Dendritic cell treated with granulocyte-macrophage colony-stimulating factor and Interleukin-4, amounts not matched to agents 40 ng/mL and 50 ng/mL, for 4 days (primary cell): ENCODE measurements at regions of chr1 and their contacts with region 1.

Region 1: DNA sequence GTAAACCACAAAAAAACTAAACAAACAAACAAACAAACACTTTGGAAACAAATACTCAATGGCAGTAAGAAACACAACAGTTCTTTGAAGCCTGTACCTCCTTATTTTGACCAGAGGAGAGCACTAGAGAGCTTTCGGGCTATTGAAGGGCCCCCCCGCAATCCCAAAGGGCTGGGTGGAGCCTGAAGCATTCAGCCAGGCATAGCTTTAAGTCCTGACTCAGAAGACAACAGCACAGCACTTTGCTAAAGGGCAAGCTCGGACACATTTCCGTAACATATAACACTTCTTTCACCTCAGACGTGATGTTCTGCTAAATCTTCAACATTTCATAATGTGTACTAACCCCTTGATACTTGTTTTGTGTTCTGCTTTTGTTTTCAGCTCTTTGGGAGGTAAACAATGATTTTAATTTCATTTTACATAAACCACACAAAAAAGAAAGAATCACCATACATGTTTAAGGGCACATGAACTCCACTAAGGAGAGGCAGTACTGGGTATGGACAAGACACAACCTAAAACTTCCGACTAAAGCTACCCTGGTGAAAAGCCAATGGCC is 9.7 kb upstream of the SHCBP1L start:
- H3K4me3 Mint-ChIP-seq: peak overlapping the region; percentile 26
- H3K27ac Mint-ChIP-seq: peak overlapping the region; percentile 34
- H3K4me1 Mint-ChIP-seq: peaks cover 6% of the 10 kb centered on the region
- H3K27me3 Mint-ChIP-seq: peaks cover 7% of the 10 kb centered on the region

Region 2: GRCh38 chr1:183233113-183233512 is 270.5 kb after region 1 on chr1:
- intact Hi-C with region 1: loop called (anchors 2 kb)
- H3K4me3 Mint-ChIP-seq: no peak overlapping the region
- H3K27ac Mint-ChIP-seq: no peak overlapping the region
- H3K4me1 Mint-ChIP-seq: no peaks in the 10 kb centered on the region
- H3K27me3 Mint-ChIP-seq: peaks cover 2% of the 10 kb centered on the region

Region 3: GRCh38 chr1:183543619-183544204 is 581.1 kb after region 1 on chr1:
- intact Hi-C with region 1: loop called (anchors 10 kb)
- H3K4me3 Mint-ChIP-seq: no peak overlapping the region
- H3K27ac Mint-ChIP-seq: peak overlapping the region; percentile 25
- H3K4me1 Mint-ChIP-seq: peaks cover 26% of the 10 kb centered on the region
- H3K27me3 Mint-ChIP-seq: no peaks in the 10 kb centered on the region

Region 4: DNA sequence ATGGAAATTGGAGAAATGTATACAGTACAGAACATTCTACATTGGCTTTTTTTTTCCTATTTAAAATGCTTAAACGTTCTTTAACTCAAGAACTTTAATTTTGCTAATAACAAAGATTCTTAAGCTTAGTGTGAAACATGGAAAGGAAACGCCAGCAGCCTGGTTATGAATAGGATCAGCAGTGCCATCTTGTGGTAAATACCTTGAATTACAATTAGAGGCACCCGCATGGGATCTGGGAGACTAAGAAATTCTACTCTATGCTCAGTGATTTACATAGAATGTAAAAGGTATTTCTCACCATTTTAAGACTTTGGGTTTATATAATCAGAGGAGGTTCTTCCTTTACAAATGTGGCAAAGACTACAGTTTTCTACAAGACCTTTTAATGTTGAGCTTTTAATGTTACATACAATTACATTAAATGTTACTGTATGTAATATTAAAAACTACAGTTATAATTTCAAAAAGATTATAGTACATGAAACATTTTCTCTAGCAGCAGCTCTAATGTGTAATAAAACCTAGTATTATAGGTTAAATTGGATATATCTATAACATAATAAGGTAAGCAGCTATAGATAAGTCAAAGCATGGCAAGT is 722.6 kb after region 1 on chr1:
- intact Hi-C with region 1: loop called (anchors 10 kb)
- H3K4me3 Mint-ChIP-seq: no peak overlapping the region
- H3K27ac Mint-ChIP-seq: no peak overlapping the region
- H3K4me1 Mint-ChIP-seq: peaks cover 30% of the 10 kb centered on the region
- H3K27me3 Mint-ChIP-seq: peaks cover 12% of the 10 kb centered on the region